Left lung (tissue), 14 donors: ENCODE measurements at regions of chr5 and their contacts with region 1.

Region 1: GRCh38 chr5:145697251-145697990 is 137.7 kb downstream of the PRELID2 start:
- DNase-seq: no peak
- ATAC-seq: peak; percentile 72
- H3K4me3 ChIP-seq: no peak overlapping the region
- H3K27ac ChIP-seq: no peak overlapping the region
- H3K4me1 ChIP-seq: peaks cover 0 to 4% of the 10 kb centered on the region in 2 donors
- H3K27me3 ChIP-seq: no peaks in the 10 kb centered on the region
- CTCF ChIP-seq: peak; percentile 27 to 44

Region 2: DNA sequence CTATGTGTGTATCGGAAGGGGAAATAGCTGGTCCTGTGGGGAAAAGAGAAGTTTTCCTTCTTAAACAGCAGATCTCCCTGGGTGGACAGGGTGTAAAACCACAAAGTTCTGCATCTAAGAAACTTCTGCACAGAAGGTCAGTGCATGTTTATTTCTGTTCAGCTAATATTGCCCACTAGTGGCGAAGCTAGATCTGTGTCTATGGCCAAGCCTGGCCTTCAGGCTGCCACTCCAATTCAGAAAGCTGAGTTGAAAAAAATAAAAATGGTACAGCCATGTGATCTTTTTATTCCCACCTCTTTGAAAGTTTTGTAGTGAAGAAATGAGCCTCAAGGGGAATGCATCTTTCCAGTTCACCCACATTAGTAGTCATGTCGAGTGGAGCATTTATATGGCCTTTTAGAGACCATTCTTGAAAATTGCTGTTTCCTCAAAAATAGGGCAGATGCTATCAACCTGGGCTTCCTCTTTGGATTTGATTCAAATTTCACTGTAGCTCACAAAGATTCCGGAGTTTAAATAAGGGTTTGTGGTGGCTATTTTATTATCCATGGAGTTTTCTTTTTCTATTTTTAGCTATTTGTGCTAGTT is 350.3 kb before region 1 on chr5:
- intact Hi-C with region 1: no loop called
- DNase-seq: peak in 2 of 4 donors; percentile 30 to 42
- ATAC-seq: peak; percentile 39
- H3K4me3 ChIP-seq: no peak overlapping the region
- H3K27ac ChIP-seq: no peak overlapping the region
- H3K4me1 ChIP-seq: no peaks in the 10 kb centered on the region
- H3K27me3 ChIP-seq: no peaks in the 10 kb centered on the region
- CTCF ChIP-seq: peak in 1 of 2 donors; percentile 22

Region 3: DNA sequence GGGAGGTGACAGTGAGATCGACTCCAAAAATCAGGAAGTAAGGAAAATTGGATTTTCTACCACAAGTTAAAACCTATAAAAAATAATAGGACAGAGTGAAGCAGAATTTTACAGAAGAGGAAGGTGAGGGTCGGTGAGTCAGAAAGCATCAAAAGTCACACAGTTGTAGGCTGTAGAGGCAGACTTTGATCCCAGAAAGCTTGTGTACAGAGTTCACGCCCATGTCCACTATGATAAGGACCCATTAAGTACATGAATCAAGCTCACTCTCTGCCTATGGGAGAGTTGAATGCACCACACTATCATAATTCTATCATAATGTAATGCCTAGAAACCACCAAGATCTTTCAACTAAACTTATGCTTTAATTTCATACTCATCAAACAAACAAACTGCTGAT is 153.5 kb before region 1 on chr5:
- intact Hi-C with region 1: no loop called
- DNase-seq: no peak
- ATAC-seq: no peak
- H3K4me3 ChIP-seq: no peak overlapping the region
- H3K27ac ChIP-seq: no peak overlapping the region
- H3K4me1 ChIP-seq: no peaks in the 10 kb centered on the region
- H3K27me3 ChIP-seq: no peaks in the 10 kb centered on the region
- CTCF ChIP-seq: no peak

Region 4: GRCh38 chr5:145825751-145826180 is 128.3 kb after region 1 on chr5:
- intact Hi-C with region 1: loop called in 1 of 2 experiments (anchors 10 kb)
- DNase-seq: peak in 2 of 4 donors; percentile 53 to 63
- ATAC-seq: peak; percentile 68
- H3K4me3 ChIP-seq: no peak overlapping the region
- H3K27ac ChIP-seq: no peak overlapping the region
- H3K4me1 ChIP-seq: peaks cover 5 to 8% of the 10 kb centered on the region in 2 donors
- H3K27me3 ChIP-seq: no peaks in the 10 kb centered on the region
- CTCF ChIP-seq: peak; percentile 43 to 62